ENCODE measurements at regions of chr2 and their contacts with region 1.

Region 1: DNA sequence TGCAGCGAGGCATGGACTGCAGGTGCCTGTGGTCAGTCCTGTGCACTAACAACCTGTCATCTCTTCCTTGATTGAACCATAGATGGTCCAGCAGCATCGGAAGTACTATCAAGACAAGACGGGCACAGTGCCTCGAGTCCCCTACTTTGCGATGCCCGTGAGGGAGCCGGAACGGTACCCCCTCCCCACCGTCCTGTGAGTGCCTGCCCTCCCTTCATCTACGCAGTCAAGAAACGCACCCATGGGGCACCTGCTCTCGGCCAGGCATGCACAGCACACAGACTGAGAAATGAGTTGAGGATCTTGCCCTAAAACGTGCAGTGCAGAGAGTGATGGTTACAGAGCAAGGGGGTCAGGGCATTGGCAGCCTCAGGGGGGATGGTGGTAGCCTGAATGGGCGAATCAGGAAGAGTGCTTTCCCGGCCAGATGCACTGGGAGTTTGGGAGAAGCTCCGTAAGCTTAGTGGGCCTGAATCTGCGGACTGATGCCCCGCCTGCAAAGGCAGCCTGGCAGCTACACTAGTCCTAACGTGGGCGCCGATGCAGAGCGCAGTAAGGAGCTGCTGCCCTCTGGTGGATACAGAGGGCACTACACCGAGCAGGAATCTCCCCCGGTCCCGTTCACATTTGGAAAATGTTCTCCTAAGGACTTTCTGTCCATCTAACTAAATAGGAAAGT is 63.6 kb downstream of the CIB4 start:
- DNase-seq: peak; percentile 46
- H3K4me3 ChIP-seq: no peak overlapping the region
- H3K27ac ChIP-seq: no peak overlapping the region
- H3K4me1 ChIP-seq: peaks cover 13% of the 10 kb centered on the region
- H3K27me3 ChIP-seq: no peaks in the 10 kb centered on the region
- CTCF ChIP-seq: peak; percentile 98

Region 2: GRCh38 chr2:26316041-26316440 is 261.5 kb before region 1 on chr2:
- CTCF ChIA-PET with region 1: no interaction called
- dilution Hi-C with region 1: no loop called
- in situ Hi-C with region 1: no loop called
- intact Hi-C with region 1: loop called (anchors 2 kb)
- DNase-seq: no peak
- H3K4me3 ChIP-seq: no peak overlapping the region
- H3K27ac ChIP-seq: no peak overlapping the region
- H3K4me1 ChIP-seq: peaks cover 10% of the 10 kb centered on the region
- H3K27me3 ChIP-seq: no peaks in the 10 kb centered on the region
- CTCF ChIP-seq: peak; percentile 5 to 33

Region 3: DNA sequence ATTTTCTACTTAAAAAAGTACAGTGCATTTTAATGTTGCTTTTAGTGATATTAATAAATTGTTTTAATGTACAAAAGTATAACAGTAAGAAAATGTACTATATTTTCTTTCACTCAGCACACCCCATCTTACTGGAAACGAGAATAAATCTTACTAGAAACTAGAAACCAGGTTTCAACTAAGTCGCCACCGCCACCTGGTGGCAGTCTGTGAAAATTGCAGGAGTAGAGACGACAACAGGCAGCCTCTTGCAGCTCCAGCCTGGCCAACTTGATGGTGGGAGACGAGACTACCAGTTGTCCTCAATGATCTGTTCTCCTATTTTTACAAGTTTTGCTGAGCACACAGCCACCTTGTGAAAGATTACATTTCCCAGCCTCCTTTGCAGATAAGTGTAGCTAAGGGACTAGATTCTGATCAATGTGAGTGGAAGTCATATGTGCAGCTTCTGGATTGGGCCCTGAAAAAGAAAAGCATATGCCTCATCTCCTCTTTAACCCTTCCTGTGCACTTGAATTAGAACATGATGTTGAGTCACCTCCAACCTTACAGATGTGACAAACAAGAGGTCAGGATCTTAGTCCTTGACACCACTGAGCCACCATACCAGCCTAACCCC is 108.4 kb before region 1 on chr2:
- CTCF ChIA-PET with region 1: interaction called, 5 read pairs
- dilution Hi-C with region 1: no loop called
- in situ Hi-C with region 1: no loop called
- intact Hi-C with region 1: loop called (anchors 1 kb)
- DNase-seq: peak; percentile 45
- H3K4me3 ChIP-seq: no peak overlapping the region
- H3K27ac ChIP-seq: no peak overlapping the region
- H3K4me1 ChIP-seq: no peaks in the 10 kb centered on the region
- H3K27me3 ChIP-seq: no peaks in the 10 kb centered on the region
- CTCF ChIP-seq: peak; percentile 80 to 88

Region 4: DNA sequence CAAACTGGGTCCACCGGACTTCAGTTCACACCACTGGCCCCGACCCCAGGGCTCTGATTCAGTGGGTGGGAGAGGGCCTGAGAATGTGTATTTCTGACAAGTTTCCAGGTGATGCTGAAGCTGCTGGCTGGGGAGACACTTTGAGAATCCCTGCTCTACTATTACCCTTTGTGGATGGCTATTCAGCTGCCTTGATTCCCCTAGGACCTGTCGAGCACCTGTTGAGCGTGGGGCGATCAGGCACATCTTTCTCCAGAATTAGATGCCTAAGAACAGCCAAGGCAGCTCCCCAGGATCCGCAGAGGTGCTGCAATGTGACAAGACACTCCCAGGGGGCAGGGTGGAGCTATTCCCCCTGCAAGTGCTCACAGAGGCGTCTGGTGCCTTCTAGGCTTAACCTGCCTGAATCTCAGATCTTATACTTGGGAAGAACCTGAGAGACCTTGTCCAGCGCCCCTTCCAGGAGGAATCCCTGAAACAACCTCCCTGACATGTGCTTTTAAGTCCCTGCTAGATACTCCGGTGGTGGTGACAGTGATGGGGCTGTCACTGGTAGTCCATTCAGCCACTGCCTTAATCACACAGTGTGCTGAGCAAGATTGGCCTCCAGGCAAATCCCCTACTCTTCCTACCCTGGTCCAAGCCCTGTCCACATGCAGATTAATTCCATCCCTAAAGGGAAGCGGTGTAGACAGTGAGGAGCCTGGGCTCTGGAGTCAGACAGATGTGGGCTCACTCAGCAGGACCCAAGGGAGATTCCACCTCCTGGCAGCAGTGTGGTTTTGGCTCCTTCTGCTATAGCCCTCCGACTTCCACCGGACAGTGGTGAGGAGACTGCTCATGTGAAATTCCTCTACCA is 56.3 kb before region 1 on chr2:
- CTCF ChIA-PET with region 1: no interaction called
- dilution Hi-C with region 1: no loop called
- in situ Hi-C with region 1: no loop called
- intact Hi-C with region 1: loop called (anchors 5 kb)
- DNase-seq: no peak
- H3K4me3 ChIP-seq: no peak overlapping the region
- H3K27ac ChIP-seq: no peak overlapping the region
- H3K4me1 ChIP-seq: no peaks in the 10 kb centered on the region
- H3K27me3 ChIP-seq: peaks cover 2% of the 10 kb centered on the region
- CTCF ChIP-seq: peak; percentile 27 to 49

Region 5: GRCh38 chr2:26612522-26613240 is 35.1 kb after region 1 on chr2:
- CTCF ChIA-PET with region 1: no interaction called
- dilution Hi-C with region 1: no loop called
- in situ Hi-C with region 1: no loop called
- intact Hi-C with region 1: no loop called
- DNase-seq: no peak
- H3K4me3 ChIP-seq: no peak overlapping the region
- H3K27ac ChIP-seq: no peak overlapping the region
- H3K4me1 ChIP-seq: no peaks in the 10 kb centered on the region
- H3K27me3 ChIP-seq: no peaks in the 10 kb centered on the region
- CTCF ChIP-seq: no peak

Region 6: GRCh38 chr2:26685989-26686839 is 108.6 kb after region 1 on chr2:
- CTCF ChIA-PET with region 1: no interaction called
- dilution Hi-C with region 1: loop called (anchors 5 kb)
- in situ Hi-C with region 1: no loop called
- intact Hi-C with region 1: no loop called
- DNase-seq: no peak
- H3K4me3 ChIP-seq: no peak overlapping the region
- H3K27ac ChIP-seq: no peak overlapping the region
- H3K4me1 ChIP-seq: peaks cover 10% of the 10 kb centered on the region
- H3K27me3 ChIP-seq: peaks cover 8% of the 10 kb centered on the region
- CTCF ChIP-seq: no peak